BJ (cell line): ENCODE measurements at regions of chr2 and their contacts with region 1.

Region 1: GRCh38 chr2:58448065-58448507 is 207.0 kb upstream of the FANCL start:
- DNase-seq: no peak
- H3K4me3 ChIP-seq: no peak overlapping the region
- H3K27me3 ChIP-seq: no peaks in the 10 kb centered on the region
- CTCF ChIP-seq: peak; percentile 70

Region 2: DNA sequence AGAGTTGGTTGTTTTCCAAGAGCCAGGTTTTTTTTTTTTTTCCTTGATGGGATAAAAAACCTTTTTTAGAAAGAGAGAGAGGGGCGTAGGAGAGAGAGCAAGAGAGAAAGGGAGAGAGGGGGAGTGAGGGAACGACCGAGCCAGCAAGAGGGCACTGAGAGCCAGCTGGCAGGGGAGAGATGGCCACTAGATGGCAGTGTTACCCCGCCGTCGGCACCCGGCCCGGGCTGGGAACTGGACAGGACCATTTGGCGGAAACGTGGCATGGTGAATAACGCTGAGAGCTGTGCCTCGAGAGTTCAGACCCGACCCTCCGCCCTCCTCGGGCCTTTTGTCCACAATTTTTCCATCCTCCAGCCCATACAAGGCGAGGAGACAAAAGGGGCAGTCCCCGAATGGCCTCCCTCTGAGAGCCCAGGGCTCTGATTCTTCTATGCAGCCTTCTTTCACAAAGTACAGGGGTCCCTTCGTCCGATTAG is 688.2 kb before region 1 on chr2:
- CTCF ChIA-PET with region 1: interaction called, 21 read pairs
- POLR2A ChIA-PET with region 1: no interaction called
- DNase-seq: no peak
- H3K4me3 ChIP-seq: peak overlapping the region; percentile 10; the same call in 1 of the 2 replicates
- H3K27me3 ChIP-seq: no peaks in the 10 kb centered on the region
- CTCF ChIP-seq: peak; percentile 97

Region 3: DNA sequence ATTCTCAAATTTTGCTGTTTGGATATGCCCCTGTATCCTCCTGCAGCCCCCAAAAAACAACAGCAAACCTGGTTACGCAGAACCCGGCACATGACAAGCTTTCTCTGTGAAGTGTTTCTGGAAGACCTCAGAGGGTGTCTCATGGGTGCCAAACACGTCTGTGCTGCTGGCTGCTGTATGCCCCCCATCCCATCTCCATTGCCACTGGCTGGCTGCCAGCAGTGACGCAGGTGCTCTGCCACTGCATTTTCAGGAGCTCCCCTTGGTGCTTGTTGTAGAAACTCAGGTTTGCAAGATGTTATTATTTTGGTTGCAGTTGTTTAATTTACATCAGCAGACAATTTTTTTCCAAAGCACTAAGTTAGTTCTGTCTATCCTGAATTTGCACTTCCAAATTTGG is 40.6 kb before region 1 on chr2:
- CTCF ChIA-PET with region 1: no interaction called
- POLR2A ChIA-PET with region 1: no interaction called
- DNase-seq: no peak
- H3K4me3 ChIP-seq: no peak overlapping the region
- H3K27me3 ChIP-seq: no peaks in the 10 kb centered on the region
- CTCF ChIP-seq: no peak

Region 4: GRCh38 chr2:58460670-58461069 is 12.6 kb after region 1 on chr2:
- CTCF ChIA-PET with region 1: interaction called, 12 read pairs
- POLR2A ChIA-PET with region 1: no interaction called
- DNase-seq: no peak
- H3K4me3 ChIP-seq: no peak overlapping the region
- H3K27me3 ChIP-seq: no peaks in the 10 kb centered on the region
- CTCF ChIP-seq: no peak

Region 5: DNA sequence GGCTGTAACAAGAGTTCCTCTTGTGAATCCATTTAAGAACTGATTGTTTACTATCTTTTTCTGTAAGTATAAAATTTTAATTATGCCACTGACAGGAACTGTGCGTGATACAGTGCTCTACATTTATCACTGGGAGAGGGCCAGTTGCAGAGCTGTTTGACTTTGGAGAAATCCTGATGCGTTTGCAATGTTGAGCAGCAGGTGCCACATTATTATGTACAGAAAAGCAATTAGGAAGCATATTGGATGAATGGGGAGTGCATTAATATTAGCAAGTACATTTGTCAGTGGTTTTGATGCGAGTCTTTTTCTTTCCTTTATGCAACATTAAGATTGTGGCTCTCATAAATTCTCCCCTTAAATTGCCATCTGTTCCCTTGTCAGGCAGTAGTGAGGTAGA is 95.3 kb after region 1 on chr2:
- CTCF ChIA-PET with region 1: no interaction called
- POLR2A ChIA-PET with region 1: no interaction called
- DNase-seq: no peak
- H3K4me3 ChIP-seq: no peak overlapping the region
- H3K27me3 ChIP-seq: no peaks in the 10 kb centered on the region
- CTCF ChIP-seq: no peak

Region 6: DNA sequence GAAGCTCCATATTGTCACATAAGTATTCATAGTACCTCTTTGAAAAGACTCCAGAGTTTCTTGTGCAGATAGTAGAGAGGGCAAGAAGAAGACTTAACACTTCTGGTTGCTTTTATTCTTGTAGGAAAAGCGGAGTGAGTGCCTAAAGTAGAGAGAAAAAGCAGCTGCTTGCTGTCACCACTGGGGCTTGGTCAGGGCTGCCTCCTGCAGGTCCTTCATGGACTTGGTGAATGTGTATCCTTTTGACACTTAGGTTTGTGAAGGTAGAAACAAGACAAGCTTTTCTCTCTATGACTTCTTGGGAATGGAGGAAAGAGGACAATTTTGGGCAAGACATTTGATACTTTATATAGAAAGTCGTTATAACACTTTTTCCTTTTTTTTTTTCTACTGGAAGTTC is 105.9 kb after region 1 on chr2:
- CTCF ChIA-PET with region 1: interaction called, 10 read pairs
- POLR2A ChIA-PET with region 1: no interaction called
- DNase-seq: no peak
- H3K4me3 ChIP-seq: no peak overlapping the region
- H3K27me3 ChIP-seq: no peaks in the 10 kb centered on the region
- CTCF ChIP-seq: 0 out of 2 replicates have a peak, but pooled peaks have one; percentile 28